ENCODE measurements at regions of chr15 and their contacts with region 1.

Region 1: GRCh38 chr15:89087830-89088604 is at the start of gene ABHD2:
- DNase-seq: peak; percentile 100
- H3K4me3 Mint-ChIP-seq: no peak within 1 kb of the TSS
- H3K27ac Mint-ChIP-seq: peak within 1 kb of the TSS; percentile 58
- H3K4me1 Mint-ChIP-seq: peaks cover 30% of the 10 kb centered on the region
- H3K27me3 Mint-ChIP-seq: no peaks in the 10 kb centered on the region
- total RNA-seq, gene ABHD2: 75.2 and 76.6 TPM in 2 replicates

Region 2: DNA sequence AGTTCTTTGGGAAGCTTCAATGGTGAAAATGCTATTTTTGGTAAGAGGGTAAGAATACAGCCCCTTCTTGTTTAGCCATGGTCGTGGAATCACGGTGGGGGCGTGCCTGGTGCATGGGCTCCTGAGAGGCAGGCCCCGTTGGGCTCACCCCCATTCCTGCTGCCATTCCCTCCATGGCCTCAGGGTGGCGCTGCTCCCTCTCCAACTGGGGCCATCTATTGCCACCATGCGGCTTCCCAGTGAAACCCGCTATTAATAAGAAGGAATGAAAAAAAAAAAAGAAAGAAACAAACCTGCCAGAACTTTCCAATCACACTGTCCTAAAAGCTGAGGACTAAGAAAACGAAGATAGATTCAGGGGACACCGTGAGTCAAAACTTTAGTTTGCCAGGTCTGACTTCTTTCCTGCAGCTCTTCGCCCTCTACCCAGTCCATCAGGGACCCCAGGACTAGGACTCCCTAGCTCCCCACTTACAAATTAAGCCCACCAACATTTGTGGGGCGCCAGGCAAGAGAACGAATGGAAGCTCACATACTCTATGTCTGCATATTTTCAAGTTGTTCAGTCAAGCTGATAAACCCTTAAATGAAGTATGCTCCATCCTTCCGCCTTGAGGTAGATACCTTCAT is 30.4 kb before region 1 on chr15:
- intact Hi-C with region 1: loop called (anchors 5 kb)
- DNase-seq: peak; percentile 95
- H3K4me3 Mint-ChIP-seq: no peak overlapping the region
- H3K27ac Mint-ChIP-seq: no peak overlapping the region
- H3K4me1 Mint-ChIP-seq: peaks cover 8% of the 10 kb centered on the region
- H3K27me3 Mint-ChIP-seq: peaks cover 2% of the 10 kb centered on the region

Region 3: GRCh38 chr15:89068325-89068784 is 19.7 kb before region 1 on chr15:
- intact Hi-C with region 1: loop called (anchors 1 kb)
- DNase-seq: peak; percentile 72
- H3K4me3 Mint-ChIP-seq: peak overlapping the region; percentile 64
- H3K27ac Mint-ChIP-seq: peak overlapping the region; percentile 93
- H3K4me1 Mint-ChIP-seq: peaks cover 14% of the 10 kb centered on the region
- H3K27me3 Mint-ChIP-seq: no peaks in the 10 kb centered on the region

Region 4: DNA sequence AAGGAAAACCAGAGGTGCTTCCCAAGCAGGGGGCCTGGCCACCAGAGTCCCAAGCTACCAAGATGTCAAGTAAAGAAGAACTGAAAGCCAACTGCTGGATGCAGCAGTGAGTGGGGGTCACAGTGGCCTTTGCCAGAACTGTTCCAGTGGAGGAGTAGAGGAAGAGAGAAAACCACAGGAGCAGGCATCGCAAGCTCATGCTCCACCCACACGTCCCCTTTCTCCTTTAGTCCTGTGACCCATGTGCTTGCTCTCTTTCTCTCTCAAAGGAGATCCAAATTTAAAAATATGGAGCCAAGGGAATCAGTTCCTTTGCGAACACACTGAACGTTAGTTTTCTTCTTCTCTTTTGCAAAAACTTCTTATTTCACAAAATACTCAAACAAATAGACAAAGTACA is 12.2 kb before region 1 on chr15:
- intact Hi-C with region 1: loop called (anchors 2 kb)
- DNase-seq: no peak
- H3K4me3 Mint-ChIP-seq: no peak overlapping the region
- H3K27ac Mint-ChIP-seq: peak overlapping the region; percentile 25
- H3K4me1 Mint-ChIP-seq: peaks cover 17% of the 10 kb centered on the region
- H3K27me3 Mint-ChIP-seq: peaks cover 7% of the 10 kb centered on the region

Region 5: GRCh38 chr15:89143503-89144162 is 55.6 kb after region 1 on chr15:
- intact Hi-C with region 1: no loop called
- DNase-seq: no peak
- H3K4me3 Mint-ChIP-seq: no peak overlapping the region
- H3K27ac Mint-ChIP-seq: peak overlapping the region; percentile 58
- H3K4me1 Mint-ChIP-seq: peaks cover 28% of the 10 kb centered on the region
- H3K27me3 Mint-ChIP-seq: no peaks in the 10 kb centered on the region

Region 6: GRCh38 chr15:89167267-89168176 is 79.5 kb after region 1 on chr15:
- intact Hi-C with region 1: loop called (anchors 1 kb)
- DNase-seq: peak; percentile 66
- H3K4me3 Mint-ChIP-seq: peak overlapping the region; percentile 69
- H3K27ac Mint-ChIP-seq: peak overlapping the region; percentile 86
- H3K4me1 Mint-ChIP-seq: peaks cover 17% of the 10 kb centered on the region
- H3K27me3 Mint-ChIP-seq: no peaks in the 10 kb centered on the region

Region 7: DNA sequence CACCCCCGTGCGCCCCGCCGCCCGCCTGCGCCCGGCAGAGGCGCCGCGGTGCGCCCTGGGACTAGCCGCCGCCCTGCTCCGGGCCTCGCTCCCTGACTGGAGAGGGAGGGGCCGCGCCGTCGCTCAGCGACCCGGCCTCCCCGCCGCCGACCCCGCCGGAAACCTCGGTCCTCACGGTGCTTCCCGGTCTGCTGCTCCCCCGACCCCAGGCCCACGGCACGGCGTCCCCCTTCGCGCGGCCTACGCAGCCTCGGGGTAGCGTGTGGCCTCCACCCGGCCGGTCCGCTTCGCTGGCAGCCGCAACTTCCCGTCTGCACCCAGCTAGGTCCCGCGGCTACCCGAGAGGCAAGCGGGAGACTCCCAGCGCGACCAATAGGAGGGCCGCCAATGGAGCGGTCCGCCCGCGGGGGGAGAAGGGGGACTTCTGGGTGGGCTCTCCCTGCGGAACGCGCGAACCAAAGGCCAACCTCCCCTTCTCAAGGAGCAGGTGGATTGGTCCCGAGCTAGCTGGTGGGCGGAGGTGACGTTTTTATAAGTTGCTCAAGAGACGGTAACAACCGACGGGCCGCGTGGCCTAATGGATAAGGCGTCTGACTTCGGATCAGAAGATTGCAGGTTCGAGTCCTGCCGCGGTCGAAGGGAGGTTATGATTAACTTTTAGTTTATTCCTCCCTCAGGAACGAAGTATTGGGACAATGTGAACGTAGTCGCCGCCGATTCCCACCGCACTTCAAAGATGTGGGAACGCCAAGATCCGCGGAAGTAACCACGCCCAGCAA is 246.7 kb after region 1 on chr15 and contains the start of gene POLG:
- intact Hi-C with region 1: loop called (anchors 5 kb)
- DNase-seq: peak; percentile 100
- H3K4me3 Mint-ChIP-seq: peak within 1 kb of the TSS; percentile 87
- H3K27ac Mint-ChIP-seq: peak within 1 kb of the TSS; percentile 95
- H3K4me1 Mint-ChIP-seq: peaks cover 50% of the 10 kb centered on the region
- H3K27me3 Mint-ChIP-seq: peaks cover 9% of the 10 kb centered on the region
- total RNA-seq, gene POLG: 124 and 134 TPM in 2 replicates

Measured in activated CD4-positive, alpha-beta T cell treated with anti-CD3 and anti-CD28 coated beads, Interleukin-2, amount 10 ng/mL, durations not matched to agents 24 days and 14 days (primary cell).